ENCODE measurements at regions of chr17 and their contacts with region 1.

Region 1: GRCh38 chr17:77409282-77410161 is 268.8 kb downstream of the SEC14L1 start:
- DNase-seq: peak in 21 of 35 experiments; percentile 32 to 79 (median 49)
- ATAC-seq: peak in 2 of 4 experiments; percentile 31 to 66
- H3K4me3 ChIP-seq: peak overlapping the region; percentile 22 to 55
- H3K4me3 Mint-ChIP-seq: peak overlapping the region in 2 of 3 donors; percentile 59 to 92
- H3K27ac ChIP-seq: peak overlapping the region; percentile 83
- H3K27ac Mint-ChIP-seq: peak overlapping the region; percentile 93 to 100
- H3K4me1 ChIP-seq: peaks cover 55 to 88% of the 10 kb centered on the region in 2 experiments
- H3K4me1 Mint-ChIP-seq: peaks cover 71 to 90% (median 80%) of the 10 kb centered on the region in 3 donors
- H3K27me3 ChIP-seq: no peaks in the 10 kb centered on the region
- H3K27me3 Mint-ChIP-seq: no peaks in the 10 kb centered on the region

Region 2: DNA sequence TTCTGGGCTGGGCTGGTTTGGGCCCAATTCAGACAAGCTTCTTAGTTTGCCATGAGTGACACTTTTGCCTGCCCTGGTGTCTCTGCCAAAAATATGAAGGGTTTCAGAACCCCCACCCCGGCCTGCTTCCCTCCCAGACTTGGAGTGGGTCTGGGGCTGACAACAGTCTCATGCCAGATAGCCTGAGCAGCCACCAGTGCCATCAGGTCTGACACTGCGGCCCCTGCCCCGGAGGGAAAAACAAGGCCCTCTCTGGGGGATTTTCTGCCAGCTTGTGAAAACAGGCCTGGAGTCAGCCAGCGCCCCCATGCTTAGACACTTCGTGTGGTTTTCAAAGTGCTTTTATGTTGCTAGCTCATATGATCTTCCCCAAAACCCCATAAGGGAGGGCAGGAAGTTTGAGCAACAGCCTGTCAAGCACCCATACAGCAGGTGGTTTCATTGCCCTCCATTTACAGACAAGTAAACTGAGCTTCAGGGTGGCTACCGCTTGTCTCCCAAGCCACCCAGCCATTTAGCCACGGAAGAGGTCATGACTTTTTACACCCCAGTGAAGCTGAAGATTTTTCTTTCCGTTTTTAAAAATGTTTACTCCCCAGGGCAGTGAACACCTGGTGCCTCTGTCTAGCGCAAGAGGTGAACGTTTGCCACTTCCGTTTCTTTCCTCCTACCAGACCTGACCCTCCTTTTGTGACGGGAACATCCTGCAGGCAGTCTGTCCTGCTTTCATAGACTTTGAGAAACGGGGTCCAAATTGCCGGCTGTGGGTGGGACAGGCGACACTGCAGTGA is 31.8 kb after region 1 on chr17:
- CTCF ChIA-PET with region 1: no interaction called
- POLR2A ChIA-PET with region 1: interaction called, 3 to 10 read pairs
- DNase-seq: peak in 34 of 35 experiments; percentile 58 to 93 (median 76)
- ATAC-seq: peak; percentile 49 to 65 (median 50)
- H3K4me3 ChIP-seq: peak overlapping the region; percentile 25 to 53
- H3K4me3 Mint-ChIP-seq: peak overlapping the region; percentile 75 to 91 (median 77)
- H3K27ac ChIP-seq: peak overlapping the region; percentile 95
- H3K27ac Mint-ChIP-seq: peak overlapping the region; percentile 99 to 100
- H3K4me1 ChIP-seq: peaks cover 80 to 100% of the 10 kb centered on the region in 2 experiments
- H3K4me1 Mint-ChIP-seq: peaks cover 98 to 100% (median 98%) of the 10 kb centered on the region in 3 donors
- H3K27me3 ChIP-seq: no peaks in the 10 kb centered on the region
- H3K27me3 Mint-ChIP-seq: no peaks in the 10 kb centered on the region

Region 3: DNA sequence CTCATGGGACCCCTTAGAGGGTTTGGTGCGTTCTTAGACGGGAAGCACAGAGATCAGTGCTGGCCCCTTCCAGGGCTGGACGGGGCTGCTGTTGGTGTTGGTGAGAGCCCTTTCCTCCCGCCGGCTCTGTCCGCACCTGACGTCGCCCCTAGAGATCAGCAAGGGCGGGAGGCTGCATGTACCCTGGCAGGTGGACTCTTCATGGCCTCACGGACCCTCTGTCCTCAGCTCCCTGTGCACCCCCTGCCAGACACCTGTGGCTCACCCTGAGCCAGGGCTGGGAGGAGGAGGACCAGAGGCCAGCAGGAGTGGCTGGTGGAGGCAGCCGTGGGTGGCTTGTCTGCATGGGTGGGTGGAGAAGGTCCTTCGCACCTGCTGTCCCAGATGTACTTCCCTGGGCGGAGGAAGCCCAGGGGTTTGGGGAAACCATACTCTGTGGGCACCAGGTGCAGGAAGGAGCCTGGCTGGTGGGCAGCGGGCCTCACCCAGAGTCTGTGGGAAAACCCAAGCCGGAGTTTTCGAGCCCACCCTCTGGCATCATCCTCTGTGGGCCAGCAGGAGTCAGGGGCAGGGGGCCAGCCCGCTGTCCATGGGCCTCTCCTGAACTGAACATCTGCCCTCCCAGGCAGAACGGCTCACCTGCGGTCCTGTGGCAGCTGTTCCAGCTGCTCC is 79.9 kb after region 1 on chr17:
- CTCF ChIA-PET with region 1: no interaction called
- POLR2A ChIA-PET with region 1: no interaction called
- DNase-seq: no peak
- ATAC-seq: no peak
- H3K4me3 ChIP-seq: no peak overlapping the region
- H3K4me3 Mint-ChIP-seq: no peak overlapping the region
- H3K27ac ChIP-seq: no peak overlapping the region
- H3K27ac Mint-ChIP-seq: peak overlapping the region in 1 of 2 donors; percentile 67
- H3K4me1 ChIP-seq: peaks cover 0 to 84% of the 10 kb centered on the region in 2 experiments
- H3K4me1 Mint-ChIP-seq: peaks cover 11 to 37% (median 27%) of the 10 kb centered on the region in 3 donors
- H3K27me3 ChIP-seq: no peaks in the 10 kb centered on the region
- H3K27me3 Mint-ChIP-seq: no peaks in the 10 kb centered on the region